Left ventricle myocardium inferior (tissue), 1 donor: ENCODE measurements at regions of chr7 and their contacts with region 1.

Region 1: GRCh38 chr7:91288208-91288824 is 24.1 kb downstream of the FZD1 start:
- DNase-seq: peak; percentile 29
- H3K4me3 ChIP-seq: no peak overlapping the region
- H3K27ac ChIP-seq: no peak overlapping the region
- H3K4me1 ChIP-seq: no peaks in the 10 kb centered on the region
- H3K27me3 ChIP-seq: no peaks in the 10 kb centered on the region
- CTCF ChIP-seq: peak; percentile 63

Region 2: DNA sequence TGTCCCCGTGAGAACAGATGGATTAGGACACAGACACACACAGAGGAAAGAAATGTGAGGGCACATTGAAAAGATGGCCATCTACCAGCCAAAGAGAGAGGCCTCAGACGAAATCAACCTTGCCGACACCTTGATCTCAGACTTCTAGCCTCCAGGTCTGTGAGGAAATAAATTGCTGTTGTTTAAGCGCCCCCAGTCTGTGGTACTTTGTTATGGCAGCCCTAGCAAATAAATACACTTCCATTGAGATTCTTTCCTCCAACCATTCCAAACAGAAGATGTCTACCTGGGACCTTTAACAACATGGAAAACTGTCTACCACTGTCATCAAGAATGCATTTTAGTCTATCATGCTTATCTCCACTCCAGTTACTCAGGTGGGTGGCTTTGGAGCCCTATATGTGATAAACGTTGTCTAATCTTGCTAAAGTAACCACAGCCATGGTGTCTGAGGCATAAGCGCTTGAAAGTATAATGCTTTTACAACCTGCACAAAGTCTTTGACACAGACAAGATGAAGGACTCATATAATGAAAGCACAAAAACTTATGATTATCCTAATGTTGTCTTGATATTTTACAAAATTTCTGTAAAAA is 347.9 kb after region 1 on chr7:
- intact Hi-C with region 1: loop called (anchors 5 kb)
- DNase-seq: no peak
- H3K4me3 ChIP-seq: no peak overlapping the region
- H3K27ac ChIP-seq: no peak overlapping the region
- H3K4me1 ChIP-seq: peaks cover 18% of the 10 kb centered on the region
- H3K27me3 ChIP-seq: no peaks in the 10 kb centered on the region
- CTCF ChIP-seq: peak; percentile 70